Heart right ventricle (tissue), 16 donors: ENCODE measurements at regions of chr14 and their contacts with region 1.

Region 1: DNA sequence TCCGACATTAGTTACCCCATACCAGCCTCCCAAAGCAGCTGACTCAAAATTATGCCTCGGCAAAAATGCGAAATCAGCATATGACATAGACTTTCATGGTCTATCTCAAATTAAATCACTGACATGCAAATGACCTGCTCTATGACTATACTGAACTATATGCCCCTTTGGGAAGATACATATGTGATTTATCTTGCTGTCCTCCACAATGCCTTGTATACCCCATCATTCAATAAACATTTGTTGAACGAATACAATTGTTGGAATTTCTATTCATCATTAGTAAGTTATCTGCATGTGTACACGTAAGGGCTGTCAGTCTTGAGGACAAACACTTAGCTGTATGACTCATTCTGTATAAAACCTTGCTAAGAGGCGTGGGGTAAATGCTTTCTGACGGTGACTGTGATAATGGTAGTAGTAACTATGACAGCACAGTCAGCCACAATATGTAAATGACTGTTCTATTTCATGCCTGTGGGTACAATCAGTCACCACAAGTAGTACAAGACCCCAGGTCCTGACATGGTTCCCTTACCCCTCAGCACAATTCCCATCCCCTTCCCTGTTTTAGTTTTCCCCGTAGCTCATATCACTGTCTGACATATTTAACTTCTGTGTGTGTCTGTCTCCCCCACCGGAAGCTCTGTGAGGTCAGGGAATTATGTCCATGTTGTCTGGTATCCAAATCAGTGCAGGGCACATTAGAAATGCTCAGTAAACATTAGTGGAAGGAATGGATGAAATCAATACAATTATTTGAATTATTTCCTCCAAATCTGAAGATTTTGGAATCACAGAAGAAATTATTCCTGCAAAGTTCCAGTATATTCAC is 42.8 kb downstream of the STXBP6 start:
- DNase-seq: peak in 1 of 2 donors; percentile 7
- ATAC-seq: peak; percentile 27 to 95 (median 80)
- H3K4me3 ChIP-seq: no peak overlapping the region
- H3K27ac ChIP-seq: peak overlapping the region in 5 of 10 donors; percentile 2 to 43 (median 33)
- H3K4me1 ChIP-seq: peaks cover 0 to 89% (median 56%) of the 10 kb centered on the region in 9 donors
- H3K27me3 ChIP-seq: no peaks in the 10 kb centered on the region
- CTCF ChIP-seq: no peak

Region 2: GRCh38 chr14:25042362-25043299 is 35.5 kb after region 1 on chr14:
- intact Hi-C with region 1: loop called in 1 of 10 experiments (anchors 5 kb)
- DNase-seq: peak in 1 of 2 donors; percentile 50
- ATAC-seq: peak in 6 of 8 donors; percentile 23 to 60 (median 49)
- H3K4me3 ChIP-seq: peak overlapping the region in 2 of 10 donors; percentile 16 to 26
- H3K27ac ChIP-seq: peak overlapping the region in 3 of 10 donors; percentile 2 to 52 (median 11)
- H3K4me1 ChIP-seq: peaks cover 0 to 52% (median 31%) of the 10 kb centered on the region in 9 donors
- H3K27me3 ChIP-seq: peaks cover 0 to 2% (median 0%) of the 10 kb centered on the region in 7 donors
- CTCF ChIP-seq: peak in 8 of 9 donors; percentile 44 to 72 (median 60)